ENCODE measurements at regions of chr4 and their contacts with region 1.

Region 1: GRCh38 chr4:186201535-186202230 is 10.3 kb downstream of the CYP4V2 start:
- DNase-seq: peak in 1 of 2 experiments; percentile 64
- H3K4me3 ChIP-seq: no peak overlapping the region
- H3K27ac ChIP-seq: no peak overlapping the region
- H3K4me1 ChIP-seq: peaks cover 0 to 2% (median 0%) of the 10 kb centered on the region in 4 experiments; a peak in 1 of 7 replicates
- H3K27me3 ChIP-seq: no peaks in the 10 kb centered on the region
- CTCF ChIP-seq: peak; percentile 91 to 93 (median 92)
- EP300 ChIP-seq: no peak
- POLR2A ChIP-seq: no peak
- RAD21 ChIP-seq: peak; percentile 63 to 70

Region 2: DNA sequence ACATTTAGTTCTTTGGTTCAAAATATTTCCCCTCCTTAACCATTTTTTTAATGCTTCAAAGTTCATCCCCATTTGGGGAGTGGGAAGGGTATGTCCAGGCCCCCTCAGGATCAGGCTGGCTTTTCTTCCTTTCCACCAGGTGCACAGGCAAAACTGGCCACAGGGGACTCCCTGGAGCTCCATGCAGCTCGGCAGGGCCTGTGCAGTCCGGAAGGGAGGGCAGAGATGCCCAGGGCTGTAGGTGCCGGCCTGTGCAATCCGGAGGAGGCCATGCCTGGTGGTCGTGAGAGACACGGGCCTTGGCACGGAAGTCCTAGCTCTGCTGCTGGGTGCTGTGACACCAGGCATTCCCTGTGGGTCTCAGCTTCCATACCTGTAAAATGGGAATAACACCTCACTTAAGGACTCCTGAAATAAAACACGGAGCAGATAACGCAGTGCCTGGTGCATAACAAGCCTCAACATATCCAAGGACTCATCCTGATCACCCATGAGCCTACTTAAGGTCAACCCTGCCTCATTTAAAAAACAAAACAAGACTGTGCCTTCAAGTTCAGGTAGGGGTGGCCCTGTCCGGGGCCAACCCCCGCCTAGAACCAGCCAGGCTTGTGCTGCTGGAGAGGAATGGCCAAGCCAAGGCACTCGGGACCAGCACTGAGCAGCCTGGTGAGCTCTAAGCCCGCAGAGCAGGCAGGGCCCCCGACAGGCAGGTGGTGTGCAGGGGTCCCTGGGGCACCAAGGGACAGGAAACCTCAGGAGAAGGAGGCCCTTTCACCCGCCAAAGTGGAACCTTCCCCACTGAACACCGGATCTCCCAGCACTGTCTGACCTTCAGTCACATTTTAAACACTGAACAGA is 31.5 kb before region 1 on chr4:
- CTCF ChIA-PET with region 1: no interaction called
- POLR2A ChIA-PET with region 1: no interaction called
- DNase-seq: no peak
- H3K4me3 ChIP-seq: no peak overlapping the region
- H3K27ac ChIP-seq: no peak overlapping the region
- H3K4me1 ChIP-seq: no peaks in the 10 kb centered on the region; a peak in 1 of 7 replicates
- H3K27me3 ChIP-seq: no peaks in the 10 kb centered on the region
- CTCF ChIP-seq: peak; percentile 11 to 34 (median 31); a peak in 2 of 4 replicates
- EP300 ChIP-seq: no peak
- POLR2A ChIP-seq: no peak
- RAD21 ChIP-seq: peak in 1 of 2 experiments; percentile 23; a peak in 1 of 4 replicates

Region 3: GRCh38 chr4:186191200-186192065 is 10.2 kb before region 1 on chr4 and contains the start of gene CYP4V2:
- CTCF ChIA-PET with region 1: interaction called, 13 read pairs
- POLR2A ChIA-PET with region 1: interaction called, 7 read pairs
- DNase-seq: peak in 1 of 2 experiments; percentile 83
- H3K4me3 ChIP-seq: peak within 1 kb of the TSS; percentile 80 to 87 (median 86)
- H3K27ac ChIP-seq: peak within 1 kb of the TSS; percentile 26
- H3K4me1 ChIP-seq: peaks cover 6 to 14% (median 8%) of the 10 kb centered on the region in 4 experiments; a peak in 5 of 7 replicates
- H3K27me3 ChIP-seq: no peaks in the 10 kb centered on the region
- CTCF ChIP-seq: peak; percentile 28 to 39 (median 30)
- EP300 ChIP-seq: peak in 1 of 2 experiments; percentile 42; a peak in 1 of 3 replicates
- POLR2A ChIP-seq: peak in 1 of 2 experiments; percentile 53; a peak in 2 of 3 replicates
- RAD21 ChIP-seq: peak in 1 of 2 experiments; percentile 39; a peak in 1 of 4 replicates
- total RNA-seq, gene CYP4V2: 1.0 and 1.4 TPM in 2 replicates